Mucosa of descending colon (tissue), 3 donors: ENCODE measurements at regions of chr4 and their contacts with region 1.

Region 1: DNA sequence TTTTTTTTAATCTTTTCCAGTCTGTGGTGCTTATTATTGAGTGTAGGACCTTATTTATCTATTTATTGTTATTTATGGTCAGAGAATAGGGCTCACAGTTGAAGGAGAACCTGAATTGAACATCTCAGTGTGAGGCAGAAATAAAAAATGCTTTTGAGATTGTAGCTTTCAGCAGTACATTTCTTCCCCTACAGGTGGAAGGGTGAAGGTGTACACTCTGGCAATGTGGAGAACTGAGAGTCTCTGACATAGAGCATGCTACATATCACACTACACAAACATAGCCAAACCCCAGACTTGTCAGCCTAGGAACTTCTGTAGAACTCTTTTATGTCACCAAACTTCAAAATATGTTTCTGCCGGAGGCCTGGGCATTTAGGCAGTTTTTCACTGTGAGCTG is 140.2 kb downstream of the STIM2 start:
- DNase-seq: no peak
- ATAC-seq: peak; percentile 53
- H3K4me3 ChIP-seq: no peak overlapping the region
- H3K4me1 ChIP-seq: peaks cover 5% of the 10 kb centered on the region
- CTCF ChIP-seq: no peak

Region 2: GRCh38 chr4:26860157-26860921 is 140.5 kb before region 1 on chr4 and contains the start of gene STIM2:
- intact Hi-C with region 1: loop called in 1 of 2 experiments (anchors 10 kb)
- DNase-seq: peak; percentile 96 to 100 (median 98)
- ATAC-seq: peak; percentile 83
- H3K4me3 ChIP-seq: peak within 1 kb of the TSS; percentile 90
- H3K4me1 ChIP-seq: peaks cover 31% of the 10 kb centered on the region
- CTCF ChIP-seq: no peak
- total RNA-seq, gene STIM2: 22.2 to 32.4 (median 23.5) TPM

Region 3: DNA sequence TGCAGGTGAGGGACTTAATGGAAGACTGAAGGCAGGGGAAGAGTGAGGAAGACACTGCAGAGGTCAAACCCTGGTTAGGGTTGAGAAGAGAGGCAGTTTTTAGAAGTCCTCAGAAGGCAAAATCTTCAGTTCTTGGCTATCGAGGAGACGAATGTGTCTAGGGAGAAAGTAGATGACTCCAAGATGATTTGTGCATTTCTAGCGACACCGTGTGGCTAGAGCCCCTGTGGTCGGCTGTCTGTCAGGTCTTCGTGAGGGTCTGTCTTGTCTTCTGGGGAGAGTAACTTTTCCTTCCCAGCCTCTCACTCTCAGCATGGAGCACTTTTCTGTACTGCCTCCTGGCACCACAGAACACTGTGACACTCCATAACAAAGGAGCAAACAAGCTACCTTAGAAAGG is 317.9 kb after region 1 on chr4:
- intact Hi-C with region 1: no loop called
- DNase-seq: peak in 2 of 3 donors; percentile 56 to 76
- ATAC-seq: no peak
- H3K4me3 ChIP-seq: no peak overlapping the region
- H3K4me1 ChIP-seq: peaks cover 18% of the 10 kb centered on the region
- CTCF ChIP-seq: no peak

Region 4: GRCh38 chr4:27366104-27366823 is 365.4 kb after region 1 on chr4:
- intact Hi-C with region 1: no loop called
- DNase-seq: no peak
- ATAC-seq: no peak
- H3K4me3 ChIP-seq: no peak overlapping the region
- H3K4me1 ChIP-seq: no peaks in the 10 kb centered on the region
- CTCF ChIP-seq: no peak